G401 (cell line): ENCODE measurements at regions of chr5 and their contacts with region 1.

Region 1: DNA sequence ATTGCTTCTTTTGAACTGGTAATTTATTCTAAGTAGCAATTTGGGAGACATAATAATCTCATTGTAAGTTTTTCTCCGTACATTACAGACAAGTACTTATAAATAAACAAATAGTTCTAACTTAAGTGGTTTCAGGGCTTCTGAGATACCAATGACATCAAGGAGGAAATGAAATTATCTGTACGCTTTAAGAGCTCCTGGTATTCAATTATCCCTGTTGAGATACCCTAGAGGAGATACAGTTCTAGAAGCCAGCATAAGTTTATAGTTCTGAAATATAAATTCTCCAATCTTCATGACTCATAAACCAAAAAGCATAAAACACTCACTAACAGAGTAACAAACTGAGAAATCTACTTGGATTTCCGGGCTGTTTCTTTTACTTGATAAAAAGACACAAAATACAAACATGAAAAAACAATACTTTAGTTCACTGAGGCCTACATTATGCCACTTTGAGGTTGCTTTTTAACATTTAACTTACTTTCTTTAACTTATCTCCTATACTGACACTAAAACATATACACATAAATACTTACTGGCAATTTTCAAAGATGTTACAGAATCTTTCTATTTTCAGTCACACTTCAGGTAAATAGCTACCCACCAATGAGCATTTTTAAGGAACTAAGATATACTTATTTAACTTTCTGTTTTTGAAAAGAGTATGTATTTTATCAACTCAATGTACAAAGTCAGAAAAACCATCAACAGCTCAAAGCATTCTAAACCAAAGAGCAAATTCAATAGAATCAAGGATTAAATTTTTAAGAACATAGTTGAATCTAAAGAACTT is 7.5 kb downstream of the DCTN4 start:
- DNase-seq: no peak

Region 2: GRCh38 chr5:150789943-150790611 is 38.8 kb after region 1 on chr5:
- in situ Hi-C with region 1: loop called (anchors 5 kb)
- DNase-seq: no peak